ENCODE measurements at regions of chr18 and their contacts with region 1.

Region 1: GRCh38 chr18:79252904-79253633 is 142.7 kb upstream of the NFATC1 start:
- DNase-seq: no peak
- ATAC-seq: no peak
- H3K4me3 ChIP-seq: no peak overlapping the region
- H3K4me3 Mint-ChIP-seq: no peak overlapping the region
- H3K27ac ChIP-seq: no peak overlapping the region
- H3K27ac Mint-ChIP-seq: no peak overlapping the region
- H3K4me1 ChIP-seq: no peaks in the 10 kb centered on the region
- H3K4me1 Mint-ChIP-seq: no peaks in the 10 kb centered on the region
- H3K27me3 ChIP-seq: no peaks in the 10 kb centered on the region
- H3K27me3 Mint-ChIP-seq: no peaks in the 10 kb centered on the region
- CTCF ChIP-seq: no peak

Region 2: DNA sequence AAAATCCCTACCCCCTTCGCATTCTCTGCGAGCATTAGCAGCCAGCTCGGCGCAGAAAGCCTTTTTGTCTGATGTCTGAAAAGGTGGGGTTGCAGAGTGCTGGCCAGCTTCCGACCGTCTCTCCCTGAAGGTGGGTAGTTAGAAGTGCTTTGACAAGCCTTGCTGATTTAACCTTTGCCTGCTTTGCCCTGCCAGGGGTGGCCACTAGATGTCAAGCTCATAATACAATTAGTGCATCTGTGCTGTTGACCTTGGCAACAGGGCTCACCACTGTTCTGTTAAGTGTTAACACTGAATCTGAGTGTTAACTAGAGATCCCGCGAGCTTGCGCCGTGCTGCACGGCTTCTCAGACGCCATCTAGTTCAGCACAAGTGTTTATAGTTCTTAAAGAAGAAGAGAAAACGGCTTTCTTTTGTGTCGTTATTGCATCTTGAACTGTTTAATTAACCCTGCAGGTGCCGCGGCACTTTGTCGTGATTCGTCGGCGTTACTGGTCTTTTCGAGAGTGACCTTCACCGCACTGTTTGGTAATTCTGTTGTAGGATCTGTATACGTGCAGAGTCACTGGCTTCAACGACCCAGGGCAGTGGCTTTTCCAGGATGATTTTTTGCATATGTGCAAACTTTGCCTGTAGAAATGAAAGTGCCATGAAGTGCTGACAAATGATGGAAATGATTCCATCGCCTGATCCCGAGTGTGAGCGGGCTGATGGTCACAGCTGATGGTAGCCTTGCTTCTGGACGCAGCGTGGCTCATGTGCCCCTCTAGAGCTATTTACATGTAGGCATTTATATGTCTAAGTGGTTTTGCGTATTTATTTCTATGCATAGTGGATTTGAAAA is 267.9 kb before region 1 on chr18:
- CTCF ChIA-PET with region 1: no interaction called
- POLR2A ChIA-PET with region 1: no interaction called
- intact Hi-C with region 1: loop called (anchors 5 kb)
- DNase-seq: peak in 4 of 14 experiments; percentile 9 to 36 (median 24)
- ATAC-seq: peak; percentile 68
- H3K4me3 ChIP-seq: no peak overlapping the region
- H3K4me3 Mint-ChIP-seq: no peak overlapping the region
- H3K27ac ChIP-seq: no peak overlapping the region
- H3K27ac Mint-ChIP-seq: no peak overlapping the region
- H3K4me1 ChIP-seq: no peaks in the 10 kb centered on the region
- H3K4me1 Mint-ChIP-seq: peaks cover 7% of the 10 kb centered on the region
- H3K27me3 ChIP-seq: peaks cover 25 to 88% of the 10 kb centered on the region in 2 experiments
- H3K27me3 Mint-ChIP-seq: peaks cover 80% of the 10 kb centered on the region
- CTCF ChIP-seq: no peak

Region 3: GRCh38 chr18:79275992-79276391 is 22.9 kb after region 1 on chr18:
- CTCF ChIA-PET with region 1: no interaction called
- POLR2A ChIA-PET with region 1: no interaction called
- intact Hi-C with region 1: no loop called
- DNase-seq: peak in 1 of 14 experiments; percentile 33
- ATAC-seq: no peak
- H3K4me3 ChIP-seq: no peak overlapping the region
- H3K4me3 Mint-ChIP-seq: no peak overlapping the region
- H3K27ac ChIP-seq: no peak overlapping the region
- H3K27ac Mint-ChIP-seq: no peak overlapping the region
- H3K4me1 ChIP-seq: peaks cover 7% of the 10 kb centered on the region
- H3K4me1 Mint-ChIP-seq: no peaks in the 10 kb centered on the region
- H3K27me3 ChIP-seq: no peaks in the 10 kb centered on the region
- H3K27me3 Mint-ChIP-seq: no peaks in the 10 kb centered on the region
- CTCF ChIP-seq: no peak

Region 4: DNA sequence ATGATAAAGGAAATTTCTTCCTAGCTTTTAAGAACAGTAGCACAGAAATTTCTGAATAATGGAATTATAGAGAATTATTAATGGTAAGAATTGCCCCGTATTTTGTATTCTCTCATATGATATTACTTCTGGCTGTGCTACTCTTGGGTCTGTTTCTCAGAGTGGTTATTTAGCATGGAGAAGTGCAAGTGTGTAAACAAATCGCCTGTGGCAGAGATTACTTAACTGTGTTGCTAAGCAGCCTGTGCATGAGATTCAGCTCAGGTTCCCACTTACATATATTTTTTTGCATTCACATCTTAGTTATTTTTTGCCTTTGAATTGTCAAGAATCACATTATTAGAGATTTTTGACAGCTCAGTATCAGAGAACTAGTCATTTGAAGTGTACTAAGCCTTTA is 62.5 kb after region 1 on chr18:
- CTCF ChIA-PET with region 1: no interaction called
- POLR2A ChIA-PET with region 1: no interaction called
- intact Hi-C with region 1: no loop called
- DNase-seq: no peak
- ATAC-seq: no peak
- H3K4me3 ChIP-seq: no peak overlapping the region
- H3K4me3 Mint-ChIP-seq: no peak overlapping the region
- H3K27ac ChIP-seq: no peak overlapping the region
- H3K27ac Mint-ChIP-seq: no peak overlapping the region
- H3K4me1 ChIP-seq: peaks cover 8% of the 10 kb centered on the region
- H3K4me1 Mint-ChIP-seq: peaks cover 19% of the 10 kb centered on the region
- H3K27me3 ChIP-seq: no peaks in the 10 kb centered on the region
- H3K27me3 Mint-ChIP-seq: no peaks in the 10 kb centered on the region
- CTCF ChIP-seq: no peak

Measured in CD4-positive, alpha-beta T cell (primary cell).